Activated CD4-positive, alpha-beta memory T cell treated with anti-CD3 and anti-CD28 coated beads for 36 hours (primary cell): ENCODE measurements at regions of chr17 and their contacts with region 1.

Region 1: DNA sequence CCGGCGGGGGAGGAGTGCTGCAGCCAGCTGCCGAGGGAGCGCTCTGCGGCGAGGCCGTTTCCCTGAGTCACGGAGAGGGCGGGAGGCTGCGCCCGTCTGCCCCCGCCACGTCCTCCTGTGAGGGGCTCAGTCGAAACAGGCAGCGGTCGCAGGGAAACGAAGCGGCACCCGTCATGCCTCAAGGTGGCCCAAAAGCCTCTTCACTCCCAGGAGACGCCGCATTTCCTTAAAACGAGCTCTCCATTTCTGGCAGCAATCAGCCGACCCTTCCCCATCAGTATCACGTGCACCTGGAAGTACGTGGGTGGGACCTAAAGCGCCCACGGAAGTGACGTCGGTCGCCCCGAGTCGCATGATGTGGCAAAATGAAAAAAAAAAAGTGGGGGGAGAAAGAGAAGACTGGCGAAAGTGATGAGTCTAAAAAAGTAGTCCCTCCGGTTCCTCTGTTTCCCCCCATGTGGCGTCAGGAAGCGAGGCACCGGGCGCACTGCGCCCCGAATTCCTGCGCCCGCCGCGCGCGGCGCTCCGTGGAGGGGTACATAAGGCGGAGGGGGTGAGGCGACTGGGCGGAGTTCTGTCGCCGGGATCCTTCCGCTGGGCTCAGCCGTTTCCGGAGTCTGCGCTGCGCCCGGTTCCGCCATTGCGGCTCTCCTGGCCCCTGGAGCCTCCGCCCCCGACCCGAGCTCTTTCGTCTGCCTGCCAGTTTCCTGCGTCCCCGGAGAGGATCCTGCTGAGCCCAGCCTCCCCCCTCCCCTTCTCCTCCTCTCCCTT is at the start of gene CLTC:
- DNase-seq: peak; percentile 96
- H3K4me3 Mint-ChIP-seq: peak within 1 kb of the TSS; percentile 94
- H3K27ac Mint-ChIP-seq: peak within 1 kb of the TSS; percentile 100
- H3K4me1 Mint-ChIP-seq: peaks cover 50% of the 10 kb centered on the region
- H3K27me3 Mint-ChIP-seq: no peaks in the 10 kb centered on the region
- total RNA-seq, gene CLTC: 203 to 206 TPM

Region 2: DNA sequence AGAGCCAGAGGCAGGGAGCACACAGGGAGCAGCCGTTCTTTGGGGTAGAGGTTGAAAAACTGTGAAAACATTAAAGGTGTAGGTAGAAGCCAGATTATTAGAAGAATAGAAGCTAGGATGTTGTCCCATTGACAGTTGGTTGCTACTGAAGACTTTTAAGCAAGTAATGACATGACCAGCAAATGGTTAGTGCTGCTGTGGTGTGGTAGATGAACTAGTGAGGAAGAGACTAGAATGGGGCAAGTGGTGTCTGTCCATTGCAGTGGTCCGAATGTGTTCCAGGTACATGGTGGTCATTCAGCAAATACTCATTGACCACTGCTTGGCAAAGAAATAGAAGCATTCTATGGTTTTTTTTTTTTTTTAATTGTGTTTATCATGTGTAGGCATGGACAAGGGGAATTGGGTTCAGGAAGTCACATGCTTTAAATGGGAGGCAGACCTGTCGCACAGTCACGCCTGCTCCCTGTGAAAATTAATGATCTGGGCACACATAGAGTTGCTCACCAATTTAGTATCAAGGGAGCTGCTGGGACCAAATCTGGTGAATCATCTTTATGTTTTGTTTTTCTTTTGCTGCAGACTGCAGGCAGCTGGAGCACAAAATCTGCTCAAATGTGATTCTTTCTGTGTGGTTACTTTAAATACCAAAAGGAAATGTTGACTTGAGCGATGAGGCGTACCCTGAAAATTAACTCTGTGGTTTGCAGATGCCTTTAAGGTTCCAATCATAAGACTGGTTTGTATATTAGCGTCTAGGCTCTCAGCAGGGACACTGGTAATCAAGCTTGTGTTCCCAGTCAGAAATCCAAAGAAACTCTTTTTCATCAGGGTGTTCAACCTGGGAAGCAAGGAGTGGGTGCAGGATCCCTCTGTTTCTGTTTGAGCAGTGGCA is 257.3 kb before region 1 on chr17:
- CTCF ChIA-PET with region 1: no interaction called
- POLR2A ChIA-PET with region 1: no interaction called
- intact Hi-C with region 1: loop called (anchors 5 kb)
- DNase-seq: peak; percentile 60
- H3K4me3 Mint-ChIP-seq: peak overlapping the region; percentile 21
- H3K27ac Mint-ChIP-seq: peak overlapping the region; percentile 83
- H3K4me1 Mint-ChIP-seq: peaks cover 78% of the 10 kb centered on the region
- H3K27me3 Mint-ChIP-seq: no peaks in the 10 kb centered on the region

Region 3: GRCh38 chr17:59572301-59572928 is 47.1 kb before region 1 on chr17:
- CTCF ChIA-PET with region 1: no interaction called
- POLR2A ChIA-PET with region 1: interaction called, 3 read pairs
- intact Hi-C with region 1: loop called (anchors 1 kb)
- DNase-seq: peak; percentile 58
- H3K4me3 Mint-ChIP-seq: no peak overlapping the region
- H3K27ac Mint-ChIP-seq: peak overlapping the region; percentile 80
- H3K4me1 Mint-ChIP-seq: peaks cover 17% of the 10 kb centered on the region
- H3K27me3 Mint-ChIP-seq: no peaks in the 10 kb centered on the region

Region 4: GRCh38 chr17:59641799-59642489 is 22.5 kb after region 1 on chr17:
- CTCF ChIA-PET with region 1: no interaction called
- POLR2A ChIA-PET with region 1: interaction called, 36 read pairs
- intact Hi-C with region 1: loop called (anchors 2 kb)
- DNase-seq: no peak
- H3K4me3 Mint-ChIP-seq: no peak overlapping the region
- H3K27ac Mint-ChIP-seq: peak overlapping the region; percentile 70
- H3K4me1 Mint-ChIP-seq: peaks cover 41% of the 10 kb centered on the region
- H3K27me3 Mint-ChIP-seq: no peaks in the 10 kb centered on the region

Region 5: GRCh38 chr17:59675231-59675630 is 55.8 kb after region 1 on chr17:
- CTCF ChIA-PET with region 1: no interaction called
- POLR2A ChIA-PET with region 1: no interaction called
- intact Hi-C with region 1: no loop called
- DNase-seq: no peak
- H3K4me3 Mint-ChIP-seq: no peak overlapping the region
- H3K27ac Mint-ChIP-seq: peak overlapping the region; percentile 58
- H3K4me1 Mint-ChIP-seq: peaks cover 13% of the 10 kb centered on the region
- H3K27me3 Mint-ChIP-seq: no peaks in the 10 kb centered on the region

Region 6: DNA sequence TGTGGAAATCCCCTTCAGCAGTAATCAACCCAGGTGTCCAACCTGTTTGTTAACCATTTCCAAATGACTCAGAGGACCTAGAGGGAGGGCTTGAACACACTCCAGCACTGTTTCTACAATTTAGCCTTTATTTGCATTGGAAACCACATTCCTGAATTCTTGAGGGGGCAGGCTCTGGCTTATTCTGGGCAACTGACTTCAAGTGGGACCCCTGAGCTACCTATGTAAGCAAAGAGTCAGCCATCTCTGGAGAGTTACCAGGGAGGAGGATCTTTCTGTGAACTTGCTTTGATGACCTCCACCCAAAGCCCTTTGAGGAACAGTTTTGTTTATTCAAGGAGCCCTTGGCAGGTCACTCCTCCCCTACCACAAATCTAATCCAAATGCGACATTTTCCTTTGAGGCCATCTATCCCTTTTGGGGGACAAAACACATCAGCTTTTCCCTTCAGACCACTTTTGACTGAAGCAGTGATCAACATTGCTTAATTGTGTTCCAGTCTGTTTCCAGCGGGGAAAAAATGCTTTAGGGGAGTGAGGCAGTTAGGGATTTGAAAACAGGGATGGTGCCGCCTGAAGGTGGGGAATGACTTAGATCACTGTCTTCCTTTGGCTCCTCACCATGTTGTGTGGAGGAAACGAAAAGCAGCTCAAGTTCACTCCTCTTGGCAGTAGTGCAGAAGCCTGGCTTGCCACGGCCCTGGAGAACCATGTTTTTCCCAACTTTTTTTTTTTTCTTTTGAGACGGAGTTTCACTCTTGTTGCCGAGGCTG is 227.1 kb after region 1 on chr17:
- CTCF ChIA-PET with region 1: no interaction called
- POLR2A ChIA-PET with region 1: interaction called, 3 read pairs
- intact Hi-C with region 1: loop called (anchors 5 kb)
- DNase-seq: peak; percentile 31
- H3K4me3 Mint-ChIP-seq: peak overlapping the region; percentile 60
- H3K27ac Mint-ChIP-seq: peak overlapping the region; percentile 100
- H3K4me1 Mint-ChIP-seq: peaks cover 68% of the 10 kb centered on the region
- H3K27me3 Mint-ChIP-seq: peaks cover 2% of the 10 kb centered on the region